Calu3 (cell line): ENCODE measurements at regions of chr7 and their contacts with region 1.

Region 1: DNA sequence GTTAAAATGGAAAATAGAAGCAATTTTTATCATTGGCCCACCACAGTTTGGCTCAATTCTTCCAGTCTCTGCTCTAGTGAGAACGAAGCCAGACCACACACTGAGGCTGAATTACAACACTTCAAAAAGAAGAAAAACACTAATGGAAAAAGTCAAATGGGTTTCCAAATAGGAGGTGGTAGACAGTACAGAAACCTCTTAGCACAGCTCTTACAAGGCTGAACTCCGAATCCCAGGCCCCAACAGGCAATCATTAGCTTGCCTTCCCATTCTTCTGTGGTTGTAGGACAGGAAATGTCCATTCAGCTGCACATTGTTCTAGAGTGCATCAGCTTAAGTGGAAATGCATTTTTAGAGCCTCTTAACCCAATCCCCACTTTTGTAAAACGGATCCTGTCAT is 115.1 kb upstream of the MEOX2 start:
- DNase-seq: no peak
- H3K4me3 Mint-ChIP-seq: no peak overlapping the region
- H3K27ac Mint-ChIP-seq: no peak overlapping the region
- H3K4me1 Mint-ChIP-seq: no peaks in the 10 kb centered on the region
- H3K27me3 Mint-ChIP-seq: no peaks in the 10 kb centered on the region
- CTCF ChIP-seq: no peak

Region 2: GRCh38 chr7:15461576-15461975 is 340.0 kb before region 1 on chr7:
- CTCF ChIA-PET with region 1: interaction called, 12 read pairs
- intact Hi-C with region 1: no loop called
- DNase-seq: no peak
- H3K4me3 Mint-ChIP-seq: no peak overlapping the region
- H3K27ac Mint-ChIP-seq: no peak overlapping the region
- H3K4me1 Mint-ChIP-seq: no peaks in the 10 kb centered on the region
- H3K27me3 Mint-ChIP-seq: no peaks in the 10 kb centered on the region
- CTCF ChIP-seq: no peak

Region 3: GRCh38 chr7:16171928-16172327 is 370.4 kb after region 1 on chr7:
- CTCF ChIA-PET with region 1: no interaction called
- intact Hi-C with region 1: no loop called
- DNase-seq: peak; percentile 13
- H3K4me3 Mint-ChIP-seq: no peak overlapping the region
- H3K27ac Mint-ChIP-seq: peak overlapping the region; percentile 12
- H3K4me1 Mint-ChIP-seq: peaks cover 12% of the 10 kb centered on the region
- H3K27me3 Mint-ChIP-seq: no peaks in the 10 kb centered on the region
- CTCF ChIP-seq: no peak